HEK293 (cell line): ENCODE measurements at regions of chr1 and their contacts with region 1.

Region 1: DNA sequence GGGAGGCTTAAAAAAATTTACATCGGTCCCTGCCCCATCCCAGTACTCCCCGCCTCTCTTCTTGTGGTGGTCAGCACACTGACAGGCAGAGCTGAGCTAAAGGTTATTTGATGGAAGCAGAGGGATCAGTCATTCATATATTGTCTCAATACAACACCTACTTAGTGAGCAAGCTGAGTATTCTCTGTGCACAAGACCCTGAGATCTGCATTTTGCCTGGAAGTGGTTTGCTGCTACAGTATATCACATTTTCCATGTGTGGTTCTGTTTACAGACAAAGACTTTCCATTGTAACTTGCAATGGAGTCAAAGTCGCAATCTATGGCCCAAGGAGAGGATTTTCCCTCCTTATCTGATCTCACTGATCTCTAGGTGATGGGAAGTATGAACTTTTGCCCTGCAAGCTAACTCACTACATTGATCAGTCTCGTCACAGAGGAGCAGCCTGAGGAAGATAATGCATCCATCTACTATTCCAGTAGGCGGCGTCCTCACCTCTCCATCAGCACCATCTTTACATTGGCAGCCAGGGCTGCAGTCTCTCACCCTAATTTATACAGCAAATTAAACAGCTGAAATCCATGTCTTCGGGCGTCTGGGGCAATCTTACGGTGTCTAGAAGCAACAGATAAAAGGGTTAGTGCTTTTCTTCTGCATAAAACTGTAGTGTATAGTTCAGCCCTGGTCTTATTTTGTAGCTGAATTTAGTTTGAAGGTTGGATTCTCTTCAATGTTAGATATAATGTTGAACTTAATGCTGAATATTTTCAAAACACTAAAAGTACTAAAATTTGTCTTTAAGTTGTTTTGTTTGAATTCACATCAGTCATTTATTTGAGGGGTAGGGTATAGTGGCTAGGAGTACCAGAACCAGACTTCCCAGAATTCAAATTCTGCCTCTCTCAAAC is 3.2 kb upstream of the TRAF5 start:
- H3K4me3 ChIP-seq: no peak overlapping the region
- H3K27ac ChIP-seq: no peak overlapping the region
- H3K4me1 ChIP-seq: no peaks in the 10 kb centered on the region
- CTCF ChIP-seq: peak; percentile 82

Region 2: DNA sequence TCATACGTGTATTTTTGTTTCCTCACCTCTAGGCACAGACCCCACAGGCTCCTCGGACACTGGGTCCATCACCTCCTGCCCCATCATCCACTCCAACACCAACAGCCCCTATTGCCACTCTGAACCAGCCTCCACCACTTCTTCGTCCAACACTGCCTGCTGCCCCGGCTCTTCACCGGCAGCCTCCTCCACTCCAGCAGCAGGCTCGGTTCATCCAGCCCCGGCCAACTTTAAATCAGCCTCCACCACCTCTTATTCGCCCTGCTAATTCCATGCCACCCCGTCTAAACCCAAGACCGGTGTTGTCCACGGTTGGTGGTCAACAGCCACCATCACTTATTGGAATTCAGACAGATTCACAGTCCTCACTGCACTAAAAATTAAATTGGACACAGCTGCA is 10.0 kb before region 1 on chr1:
- CTCF ChIA-PET with region 1: interaction called, 11 read pairs
- POLR2A ChIA-PET with region 1: no interaction called
- H3K4me3 ChIP-seq: no peak overlapping the region
- H3K27ac ChIP-seq: no peak overlapping the region
- H3K4me1 ChIP-seq: no peaks in the 10 kb centered on the region
- CTCF ChIP-seq: no peak

Region 3: DNA sequence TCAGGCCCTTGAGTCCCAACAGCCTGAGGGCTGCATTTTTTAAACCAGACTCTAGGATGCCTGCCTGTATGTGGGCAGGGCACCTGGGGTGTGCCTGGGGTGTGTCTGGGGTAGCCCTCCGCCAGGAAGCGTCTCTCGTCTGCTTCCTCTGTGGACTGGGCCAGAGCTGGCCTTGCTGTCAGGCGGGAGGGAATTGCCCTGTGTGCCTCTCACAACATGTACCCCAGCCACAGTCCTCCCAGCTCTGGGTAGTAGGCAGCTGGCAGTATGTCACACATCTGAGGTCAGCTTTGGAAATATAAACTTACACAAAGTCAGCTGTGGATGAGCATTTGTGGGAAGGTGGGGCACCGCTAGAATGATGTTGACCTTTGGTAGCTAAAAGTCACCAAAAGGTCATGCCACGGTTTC is 16.2 kb after region 1 on chr1:
- CTCF ChIA-PET with region 1: interaction called, 10 read pairs
- POLR2A ChIA-PET with region 1: interaction called, 3 read pairs
- H3K4me3 ChIP-seq: no peak overlapping the region
- H3K27ac ChIP-seq: no peak overlapping the region
- H3K4me1 ChIP-seq: no peaks in the 10 kb centered on the region
- CTCF ChIP-seq: no peak

Region 4: GRCh38 chr1:211469938-211470529 is 146.6 kb after region 1 on chr1:
- CTCF ChIA-PET with region 1: interaction called, 13 read pairs
- POLR2A ChIA-PET with region 1: no interaction called
- H3K4me3 ChIP-seq: no peak overlapping the region
- H3K27ac ChIP-seq: no peak overlapping the region
- H3K4me1 ChIP-seq: no peaks in the 10 kb centered on the region
- CTCF ChIP-seq: peak; percentile 80

Region 5: DNA sequence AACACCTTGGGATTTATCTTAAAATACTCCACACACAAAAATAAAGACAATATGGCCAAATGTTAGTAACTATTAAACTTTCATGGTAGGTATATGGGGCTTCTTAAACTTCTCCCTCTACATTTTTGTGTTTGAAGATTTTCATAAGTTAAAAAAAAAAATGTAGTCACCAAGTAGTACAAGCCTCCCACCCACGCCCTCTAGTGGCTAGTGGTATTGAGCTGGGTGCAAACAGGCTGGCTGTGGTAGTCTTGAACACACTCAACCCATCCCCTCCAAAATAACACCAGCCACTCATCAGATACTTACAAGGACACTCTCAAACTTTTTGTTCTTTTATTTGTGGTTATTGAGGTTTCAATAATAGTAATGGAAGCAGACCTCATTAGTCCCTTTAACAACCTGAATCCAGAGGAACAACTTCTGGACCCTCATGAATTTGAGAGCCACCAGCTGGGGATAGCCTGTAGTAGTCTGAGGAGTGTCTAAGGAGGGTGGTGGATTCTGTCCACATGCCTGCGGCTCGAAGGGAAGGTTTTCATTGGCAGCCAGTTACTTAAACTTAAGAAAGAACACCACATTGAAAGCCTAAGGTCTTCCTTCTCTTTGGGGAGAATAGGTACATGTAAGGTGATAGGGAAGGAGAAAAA is 152.9 kb after region 1 on chr1:
- CTCF ChIA-PET with region 1: interaction called, 16 read pairs
- POLR2A ChIA-PET with region 1: no interaction called
- H3K4me3 ChIP-seq: no peak overlapping the region
- H3K27ac ChIP-seq: no peak overlapping the region
- H3K4me1 ChIP-seq: no peaks in the 10 kb centered on the region
- CTCF ChIP-seq: peak; percentile 52; the same call in 1 of the 2 replicates

Region 6: DNA sequence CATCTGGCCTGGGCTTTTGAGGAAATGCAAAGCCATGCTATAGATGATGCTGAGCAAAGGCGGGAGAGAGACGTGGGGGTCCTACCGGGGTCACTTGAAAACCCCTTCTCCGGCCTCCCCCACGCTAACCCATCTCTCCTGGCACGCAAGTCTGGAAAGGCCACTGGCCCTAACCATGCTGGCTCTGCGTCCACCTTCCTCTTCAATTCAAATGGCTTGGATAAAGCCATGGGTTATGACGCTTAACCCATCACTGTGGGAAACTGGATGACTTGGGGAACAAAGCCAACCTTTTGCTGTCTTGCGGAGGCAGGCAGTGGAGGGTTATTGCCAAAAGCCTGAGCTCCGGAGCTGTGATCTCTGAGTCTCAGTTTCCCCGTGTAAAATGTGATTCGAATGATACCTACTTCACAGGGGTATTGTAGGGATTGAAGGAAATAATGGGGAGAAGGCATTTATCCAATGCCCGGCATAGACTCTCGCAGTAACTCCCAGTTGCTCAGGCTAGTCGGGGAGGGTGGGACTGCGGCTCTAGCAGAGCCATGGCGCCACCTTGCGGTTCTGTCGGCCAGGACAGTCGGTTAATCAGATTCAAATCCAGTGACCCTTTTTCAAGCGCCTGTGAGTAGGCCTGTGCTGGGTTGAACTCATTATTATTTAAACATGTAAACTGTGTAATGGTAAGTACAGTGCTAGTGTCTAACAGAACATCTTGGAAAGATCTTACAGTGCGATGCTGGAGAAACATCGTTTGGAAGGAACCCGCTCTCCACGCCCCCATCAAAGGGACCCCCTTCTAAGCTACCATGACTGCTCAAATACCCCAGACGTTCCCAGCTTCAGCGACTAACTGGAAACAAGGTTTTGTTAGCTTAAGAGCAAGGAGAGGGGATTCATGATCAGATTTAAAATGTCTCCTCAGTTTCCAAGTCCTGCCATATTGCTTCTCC is 331.7 kb after region 1 on chr1:
- CTCF ChIA-PET with region 1: interaction called, 19 read pairs
- POLR2A ChIA-PET with region 1: no interaction called
- H3K4me3 ChIP-seq: no peak overlapping the region
- H3K27ac ChIP-seq: no peak overlapping the region
- H3K4me1 ChIP-seq: 0 out of 2 replicates have a peak, but pooled peaks cover 4% of the 10 kb centered on the region
- CTCF ChIP-seq: peak; percentile 80